AG04449 (cell line): ENCODE measurements at regions of chr13 and their contacts with region 1.

Region 1: DNA sequence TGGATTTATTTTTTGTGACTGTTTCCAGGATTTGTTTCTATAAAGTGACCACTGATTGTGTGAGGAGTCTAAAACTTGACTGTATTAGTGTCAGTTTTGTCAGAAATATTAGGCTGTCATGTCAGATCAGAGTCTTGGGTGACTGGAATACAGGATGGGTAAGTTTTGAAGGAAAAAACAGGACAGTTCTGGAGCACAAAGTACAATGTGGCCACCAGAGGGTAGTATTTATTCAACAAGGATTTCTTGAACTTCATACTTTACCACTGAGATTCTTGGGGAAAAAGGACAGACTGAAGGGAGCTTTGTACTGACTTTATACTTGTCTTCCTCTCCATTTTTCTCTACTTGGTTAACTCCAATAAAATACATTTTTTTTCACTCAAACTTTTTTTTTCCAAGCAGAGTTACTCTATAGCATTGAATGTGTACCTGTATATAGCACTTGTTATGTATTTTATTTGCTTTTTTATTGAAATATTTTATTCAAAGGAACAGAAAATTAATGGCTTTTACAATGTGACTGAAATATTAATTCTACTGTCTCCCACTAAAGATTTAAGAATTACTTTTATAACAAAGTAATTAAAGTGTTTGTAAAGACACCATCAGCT is 51.1 kb downstream of the LMO7 start:
- DNase-seq: no peak
- H3K4me3 ChIP-seq: no peak overlapping the region
- CTCF ChIP-seq: peak; percentile 32

Region 2: DNA sequence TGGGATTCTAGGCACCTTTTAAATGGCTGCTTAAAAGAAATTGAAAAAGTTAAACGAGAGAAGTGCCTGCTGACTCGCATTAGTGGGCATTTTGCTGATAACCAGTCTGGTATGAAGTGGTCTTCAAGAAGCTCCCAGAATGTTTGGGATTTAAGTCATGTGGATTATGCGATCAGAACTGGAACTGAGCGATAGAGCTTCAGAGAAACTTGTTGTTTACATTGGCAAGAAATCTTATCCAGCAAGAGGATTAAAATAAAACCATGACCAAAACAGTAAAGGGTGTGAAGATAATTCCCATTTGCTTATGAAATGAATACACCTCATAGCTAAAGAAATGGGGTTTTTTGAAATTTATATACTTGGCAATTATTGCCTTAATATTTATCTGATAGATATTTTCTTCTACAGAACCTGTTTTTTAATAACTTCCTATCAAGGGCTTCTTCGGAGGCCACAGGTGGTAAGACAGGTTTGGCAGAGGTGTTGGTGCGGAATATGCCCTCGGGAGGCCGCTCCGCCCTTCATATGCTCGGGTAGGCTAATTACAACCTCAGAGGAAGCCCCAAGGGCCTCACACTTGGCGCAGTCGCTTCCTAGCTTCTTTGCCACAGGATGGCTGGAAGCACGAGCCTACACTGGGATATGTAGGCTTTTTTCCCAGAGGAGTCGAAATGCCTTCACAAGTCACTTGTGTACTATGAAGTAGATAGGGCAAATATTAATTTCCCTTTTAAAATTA is 17.5 kb after region 1 on chr13:
- CTCF ChIA-PET with region 1: interaction called, 106 read pairs
- POLR2A ChIA-PET with region 1: no interaction called
- DNase-seq: peak; percentile 67
- H3K4me3 ChIP-seq: no peak overlapping the region
- CTCF ChIP-seq: no peak